ENCODE measurements at regions of chr12 and their contacts with region 1.

Region 1: DNA sequence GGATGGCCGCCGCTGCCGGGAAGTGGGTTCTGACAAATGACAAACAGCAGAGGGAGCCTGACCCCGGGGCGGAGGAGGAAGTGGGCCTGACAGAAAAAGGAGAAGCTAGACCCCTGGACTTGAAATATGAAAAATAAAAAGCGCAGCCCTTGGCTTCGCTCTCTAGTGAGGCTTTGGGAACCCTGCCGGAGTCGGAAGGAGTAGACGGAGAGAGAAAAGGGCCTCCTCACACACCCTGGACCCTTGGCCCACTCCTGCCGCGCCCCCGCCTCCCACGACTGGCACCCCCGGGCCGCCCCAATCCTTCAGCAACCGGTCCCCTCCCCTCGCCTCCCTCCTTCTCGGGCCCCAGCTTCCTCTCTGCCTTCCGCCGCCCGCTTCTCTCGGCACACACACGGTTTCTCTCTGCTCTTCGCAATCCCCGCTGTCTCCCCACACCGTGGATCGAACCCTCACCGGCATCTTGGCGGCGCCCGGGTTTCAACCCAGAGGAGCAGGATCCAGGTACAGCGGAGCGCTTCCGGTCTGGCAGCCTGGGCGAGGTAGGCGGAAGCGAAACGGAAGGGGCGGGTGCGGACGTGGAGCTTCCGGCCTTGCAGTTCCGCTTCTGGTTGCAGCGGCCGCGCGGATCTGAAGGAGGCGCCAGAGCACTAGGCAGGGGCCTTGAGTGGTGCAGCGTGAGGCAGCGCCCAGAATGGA is at the start of gene ARPC3:
- DNase-seq: peak; percentile 97
- H3K4me3 Mint-ChIP-seq: peak within 1 kb of the TSS; percentile 99
- H3K27ac Mint-ChIP-seq: peak within 1 kb of the TSS; percentile 100
- H3K4me1 Mint-ChIP-seq: peaks cover 46% of the 10 kb centered on the region
- H3K27me3 Mint-ChIP-seq: no peaks in the 10 kb centered on the region
- total RNA-seq, gene ARPC3: 460 to 466 TPM

Region 2: DNA sequence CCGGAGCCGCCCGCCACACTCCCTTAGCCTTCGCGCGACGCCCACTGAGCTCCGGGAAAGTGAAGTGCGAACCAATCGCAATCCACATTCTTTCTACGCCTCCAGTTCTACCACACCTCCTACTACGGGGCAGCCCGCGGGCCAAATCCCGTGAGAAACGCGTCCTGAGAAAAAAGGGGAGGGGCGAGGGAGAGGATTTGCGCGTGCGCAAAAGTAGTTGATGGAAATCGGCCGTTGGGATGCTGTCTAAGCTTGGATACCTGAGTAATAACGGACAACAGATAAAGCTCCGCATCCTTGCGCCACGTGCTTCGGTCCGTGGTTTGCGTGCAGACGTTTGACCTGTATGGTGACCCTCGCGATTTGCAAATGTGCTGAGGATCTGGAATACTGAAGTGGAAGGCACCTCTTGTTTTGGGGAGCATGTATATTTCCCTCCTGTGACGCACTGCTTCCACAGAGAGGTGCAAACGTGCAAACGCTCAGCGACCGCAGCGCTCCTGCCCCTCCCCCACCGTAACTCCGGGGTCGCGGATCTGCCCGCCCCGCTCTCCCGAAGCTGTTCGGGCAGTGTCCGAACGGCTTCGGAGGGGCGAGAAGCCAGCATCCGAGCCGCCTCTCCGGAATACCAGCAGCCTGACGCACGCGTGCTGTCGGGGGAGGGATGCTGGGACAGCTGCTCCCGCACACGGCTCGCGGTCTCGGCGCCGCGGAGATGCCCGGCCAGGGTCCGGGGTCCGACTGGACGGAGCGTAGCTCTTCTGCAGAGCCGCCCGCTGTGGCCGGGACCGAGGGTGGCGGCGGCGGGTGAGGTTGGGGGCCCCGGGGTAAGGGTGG is 18.5 kb after region 1 on chr12 and contains the starts of genes FAM216A and GPN3:
- CTCF ChIA-PET with region 1: interaction called, 67 read pairs
- POLR2A ChIA-PET with region 1: interaction called, 139 read pairs
- DNase-seq: peak; percentile 98
- H3K4me3 Mint-ChIP-seq: peak within 1 kb of the TSS; percentile 92
- H3K27ac Mint-ChIP-seq: peak within 1 kb of the TSS; percentile 95
- H3K4me1 Mint-ChIP-seq: peaks cover 37% of the 10 kb centered on the region
- H3K27me3 Mint-ChIP-seq: no peaks in the 10 kb centered on the region
- total RNA-seq, gene FAM216A: 14.7 to 16.7 TPM
- total RNA-seq, gene GPN3: 18.9 to 21.6 TPM

Region 3: DNA sequence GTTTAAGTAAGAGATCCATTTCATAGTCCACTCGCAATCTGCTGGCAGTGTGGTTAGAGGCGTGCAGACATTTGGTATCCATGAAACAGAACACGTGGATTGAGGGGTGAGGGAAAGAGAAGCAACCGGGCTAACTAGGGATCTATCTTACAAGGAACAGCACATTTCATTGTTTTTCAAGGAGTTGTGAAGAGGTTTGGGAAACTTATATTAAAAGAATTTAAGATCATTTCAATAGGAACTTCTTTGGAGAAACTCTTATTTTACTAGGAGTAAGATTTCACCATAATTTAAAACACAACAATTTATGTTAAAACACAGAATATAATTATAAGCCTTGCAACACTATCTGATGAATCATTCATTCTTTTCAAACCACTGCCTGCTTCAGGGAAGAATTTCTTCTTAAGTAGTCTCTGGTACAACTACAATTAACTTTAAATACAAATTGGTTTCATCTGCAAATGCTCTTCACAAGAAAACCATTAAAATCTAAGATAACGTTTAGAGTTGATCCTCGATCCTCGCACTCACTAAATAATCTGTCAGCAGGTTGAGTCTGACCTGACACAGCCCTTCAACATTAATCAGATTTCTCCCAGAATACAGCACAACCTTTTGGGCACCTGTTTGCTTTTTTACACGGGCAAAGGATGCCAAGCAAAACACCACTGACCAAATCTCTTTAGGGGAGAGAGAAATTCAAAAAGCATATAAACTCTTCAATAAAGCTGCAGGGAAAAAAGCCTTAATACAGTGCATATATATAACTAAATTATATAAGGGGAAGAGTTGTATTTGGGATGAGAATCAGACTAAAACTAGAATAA is 105.8 kb after region 1 on chr12:
- CTCF ChIA-PET with region 1: interaction called, 12 read pairs
- POLR2A ChIA-PET with region 1: interaction called, 5 read pairs
- DNase-seq: no peak
- H3K4me3 Mint-ChIP-seq: no peak overlapping the region
- H3K27ac Mint-ChIP-seq: no peak overlapping the region
- H3K4me1 Mint-ChIP-seq: peaks cover 30% of the 10 kb centered on the region
- H3K27me3 Mint-ChIP-seq: no peaks in the 10 kb centered on the region

Region 4: DNA sequence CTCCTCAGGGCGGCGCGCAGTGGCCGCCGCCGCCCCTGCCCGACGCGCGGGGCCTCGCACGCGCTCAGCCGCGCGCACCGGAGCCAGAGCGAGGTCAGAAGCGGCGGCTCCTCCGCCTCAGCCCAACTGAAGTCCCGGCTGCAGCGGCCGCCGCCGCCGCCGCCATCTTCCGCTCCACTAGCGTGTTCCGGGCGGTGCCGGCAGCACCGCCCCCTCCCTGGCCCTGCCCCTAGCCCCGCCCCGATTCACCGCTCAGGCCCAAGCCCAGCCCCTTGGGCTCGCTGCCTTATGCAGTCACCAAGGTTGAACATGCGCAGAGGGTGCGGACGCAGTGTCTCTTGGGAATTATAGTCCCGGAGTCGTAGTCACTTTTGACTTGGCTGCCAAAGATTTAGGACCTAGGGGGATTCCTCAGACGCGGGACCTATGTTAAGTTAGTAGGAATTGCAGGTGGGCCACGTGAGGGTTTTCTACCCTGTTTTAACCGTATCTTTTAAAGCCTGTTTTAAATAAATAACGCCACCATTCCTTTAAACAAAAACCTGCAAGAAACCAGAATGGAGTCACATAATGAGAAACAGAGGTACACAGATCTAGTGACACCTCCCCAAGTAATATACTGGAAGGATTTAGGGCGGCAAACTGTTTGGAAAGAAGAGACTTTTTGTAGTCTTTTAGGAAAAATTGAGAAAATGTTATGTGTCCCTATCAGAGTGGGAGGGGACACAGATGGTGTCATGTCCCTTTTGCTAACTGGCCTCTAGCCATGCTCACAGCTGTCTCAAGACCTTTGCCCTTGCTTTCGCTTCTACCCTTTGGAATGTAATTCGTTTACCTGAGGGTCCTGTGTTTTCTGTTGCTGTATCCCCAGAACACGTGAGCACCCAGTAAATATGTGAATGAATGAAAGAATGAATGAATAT is 133.4 kb after region 1 on chr12 and contains the start of gene PPTC7:
- CTCF ChIA-PET with region 1: interaction called, 4 read pairs
- POLR2A ChIA-PET with region 1: interaction called, 18 read pairs
- DNase-seq: peak; percentile 97
- H3K4me3 Mint-ChIP-seq: peak within 1 kb of the TSS; percentile 88
- H3K27ac Mint-ChIP-seq: peak within 1 kb of the TSS; percentile 88
- H3K4me1 Mint-ChIP-seq: peaks cover 64% of the 10 kb centered on the region
- H3K27me3 Mint-ChIP-seq: no peaks in the 10 kb centered on the region
- total RNA-seq, gene PPTC7: 31.5 to 31.8 TPM

Region 5: DNA sequence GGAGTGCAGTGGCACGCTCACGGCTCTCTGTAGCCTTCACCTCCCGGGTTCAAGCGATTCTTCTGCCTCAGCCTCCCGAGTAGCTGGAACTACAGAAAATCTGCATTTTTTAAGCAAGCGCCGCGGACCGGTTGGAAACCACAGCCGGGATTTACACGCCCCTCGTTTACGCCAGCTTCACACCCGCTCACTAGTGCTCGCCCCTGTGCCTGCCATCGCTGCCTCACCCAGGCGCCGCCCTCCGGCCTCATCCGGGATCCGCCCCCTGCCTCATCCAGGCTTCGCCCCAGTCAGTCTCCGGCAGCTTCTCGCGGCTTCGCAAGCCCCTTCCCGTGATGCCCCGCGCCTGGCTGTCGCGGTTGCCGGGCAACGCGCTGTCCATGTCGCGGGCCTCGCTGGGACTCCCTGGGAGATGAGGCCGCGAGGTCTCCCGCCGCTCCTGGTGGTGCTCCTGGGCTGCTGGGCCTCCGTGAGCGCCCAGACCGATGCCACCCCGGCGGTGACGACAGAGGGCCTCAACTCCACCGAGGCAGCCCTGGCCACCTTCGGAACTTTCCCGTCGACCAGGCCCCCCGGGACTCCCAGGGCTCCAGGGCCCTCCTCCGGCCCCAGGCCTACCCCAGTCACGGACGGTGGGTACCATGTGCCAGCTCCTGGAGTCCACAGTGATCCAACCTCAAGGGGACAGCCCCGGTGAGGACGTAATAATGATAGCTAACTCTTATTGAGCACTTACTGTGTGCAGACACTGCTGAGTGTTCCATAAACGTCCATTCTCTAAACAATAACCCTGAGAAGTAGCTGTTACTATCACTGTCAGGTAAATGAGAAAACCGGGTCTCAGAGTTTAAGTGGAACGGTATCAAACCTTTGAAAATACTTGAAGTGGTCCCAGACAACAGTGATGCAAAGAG is 164.1 kb after region 1 on chr12 and contains the start of gene TCTN1:
- CTCF ChIA-PET with region 1: interaction called, 5 read pairs
- POLR2A ChIA-PET with region 1: interaction called, 17 read pairs
- DNase-seq: peak; percentile 98
- H3K4me3 Mint-ChIP-seq: peak within 1 kb of the TSS; percentile 81
- H3K27ac Mint-ChIP-seq: peak within 1 kb of the TSS; percentile 79
- H3K4me1 Mint-ChIP-seq: peaks cover 14% of the 10 kb centered on the region
- H3K27me3 Mint-ChIP-seq: no peaks in the 10 kb centered on the region
- total RNA-seq, gene TCTN1: 2.6 to 3.4 TPM

Measured in activated CD4-positive, alpha-beta memory T cell treated with anti-CD3 and anti-CD28 coated beads, Interleukin-2, amount 10 ng/mL, durations not matched to agents 7 days and 5 days (primary cell).